Left cardiac atrium (tissue), 4 donors: ENCODE measurements at regions of chr13 and their contacts with region 1.

Region 1: GRCh38 chr13:48769107-48769704 is 115.5 kb downstream of the CYSLTR2 start:
- DNase-seq: peak; percentile 76
- ATAC-seq: peak; percentile 89 to 95

Region 2: DNA sequence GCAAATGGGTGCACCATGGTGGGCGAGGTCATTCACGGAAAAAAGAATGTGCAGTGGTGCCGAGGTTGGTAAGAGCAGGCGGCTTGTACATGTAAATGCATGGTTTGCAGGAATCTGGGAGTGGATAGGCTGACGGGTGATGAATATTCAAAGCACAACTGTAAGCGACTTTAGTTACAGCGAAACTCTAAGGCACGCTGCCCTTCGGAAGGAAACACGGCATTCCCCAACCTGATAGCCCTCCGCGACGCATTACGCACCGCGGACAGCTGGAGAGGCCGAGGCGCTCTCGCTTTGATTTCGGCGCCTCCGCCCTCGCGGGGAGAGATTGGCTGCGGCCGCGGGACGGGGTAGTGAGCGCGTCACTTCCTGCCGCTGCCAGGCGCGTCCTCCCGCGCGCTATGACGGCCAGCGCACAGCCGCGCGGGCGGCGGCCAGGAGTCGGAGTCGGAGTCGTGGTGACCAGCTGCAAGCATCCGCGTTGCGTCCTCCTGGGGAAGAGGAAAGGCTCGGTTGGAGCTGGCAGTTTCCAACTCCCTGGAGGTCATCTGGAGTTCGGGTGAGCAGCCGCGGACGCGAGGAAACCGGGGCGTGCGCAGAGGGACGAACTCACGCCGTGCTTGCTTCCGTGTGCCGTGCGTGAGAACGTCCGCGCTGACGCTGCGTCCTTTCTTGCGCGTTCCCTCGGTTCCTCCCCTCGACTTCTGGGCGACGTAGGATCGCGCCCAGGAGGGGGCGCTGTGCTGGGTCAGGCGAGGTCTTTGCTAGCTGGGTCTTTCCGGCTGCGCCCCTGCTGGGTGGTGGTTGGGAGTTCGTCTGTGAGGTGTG is 731.6 kb before region 1 on chr13 and contains the start of gene NUDT15:
- intact Hi-C with region 1: loop called in 1 of 2 experiments (anchors 5 kb)
- DNase-seq: peak; percentile 95
- ATAC-seq: peak; percentile 99
- total RNA-seq, gene NUDT15: 9.4 to 10.5 TPM

Region 3: DNA sequence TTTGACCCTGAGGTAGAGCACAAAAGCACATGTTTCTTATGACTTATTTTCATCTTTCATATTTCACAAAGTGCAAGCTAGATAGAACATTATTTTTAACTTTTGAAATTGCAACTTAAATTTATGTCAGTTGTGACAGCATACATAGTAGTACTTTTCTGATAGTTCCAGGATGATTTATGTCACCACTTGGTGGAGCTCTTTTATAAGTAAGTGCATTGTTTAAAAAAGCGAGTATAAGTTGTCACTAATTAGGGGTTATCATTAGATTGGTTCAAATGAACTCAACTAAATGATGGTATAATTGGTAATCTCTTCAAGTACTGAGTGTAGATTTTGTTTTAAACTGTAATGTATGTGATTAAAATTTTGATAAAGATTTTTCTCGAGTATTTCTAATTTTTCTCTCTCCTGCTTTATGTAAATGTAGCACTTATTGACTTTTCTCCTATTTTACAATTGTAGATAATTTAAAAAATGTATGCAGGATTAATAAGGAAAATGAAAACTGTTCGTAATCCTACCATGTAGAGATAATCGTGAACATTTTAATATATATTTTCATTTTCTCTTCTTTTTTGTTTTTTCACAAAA is 434.6 kb before region 1 on chr13:
- intact Hi-C with region 1: loop called in 1 of 2 experiments (anchors 10 kb)
- DNase-seq: no peak
- ATAC-seq: peak; percentile 58 to 63

Region 4: GRCh38 chr13:48595431-48596429 is 173.5 kb before region 1 on chr13:
- intact Hi-C with region 1: loop called (anchors 1 to 2 kb)
- DNase-seq: peak; percentile 69
- ATAC-seq: peak; percentile 94 to 95

Region 5: DNA sequence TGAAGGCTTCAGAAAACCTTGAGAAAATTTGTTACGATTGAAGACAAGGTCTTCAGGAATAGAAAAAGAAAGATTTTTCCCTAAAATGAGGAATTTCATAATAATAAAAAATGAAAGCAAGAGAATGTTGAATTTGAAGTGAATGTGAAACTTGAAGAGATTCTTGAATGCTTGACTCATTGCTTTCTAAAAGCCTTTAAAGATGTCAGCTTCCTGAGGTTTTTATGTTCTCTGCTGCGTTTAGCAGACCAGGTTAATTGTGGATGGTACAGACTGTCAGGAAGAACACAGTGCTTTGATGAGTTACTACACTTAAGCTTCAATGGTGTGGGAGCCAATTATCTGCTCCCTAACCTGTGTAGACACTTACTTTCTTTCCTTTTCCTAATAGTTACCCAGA is 110.2 kb after region 1 on chr13:
- intact Hi-C with region 1: no loop called
- DNase-seq: no peak
- ATAC-seq: no peak

Region 6: GRCh38 chr13:48975856-48976575 is 206.8 kb after region 1 on chr13 and contains the start of gene FNDC3A:
- intact Hi-C with region 1: no loop called
- DNase-seq: peak; percentile 88
- ATAC-seq: peak; percentile 92 to 94
- total RNA-seq, gene FNDC3A: 22.0 to 35.8 TPM

Region 7: DNA sequence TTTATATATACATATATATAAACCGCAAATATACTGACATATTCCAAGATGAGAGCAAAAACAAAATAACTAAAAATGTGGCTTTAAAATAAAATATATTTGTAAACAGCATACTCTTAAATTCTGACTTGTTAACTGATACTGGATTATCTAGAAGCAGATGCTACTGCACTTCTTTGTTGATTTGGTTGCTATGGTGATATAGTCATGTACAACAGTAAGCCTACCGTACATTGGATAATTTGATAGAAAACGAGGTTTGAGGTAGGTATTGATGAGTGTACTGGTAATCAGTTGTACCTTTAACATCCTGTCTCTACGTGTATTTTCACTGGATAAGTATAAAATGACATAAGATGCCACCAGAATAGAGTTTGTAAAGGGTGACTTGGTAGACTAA is 263.9 kb after region 1 on chr13:
- intact Hi-C with region 1: no loop called
- DNase-seq: no peak
- ATAC-seq: no peak